ENCODE measurements at regions of chr4 and their contacts with region 1.

Region 1: GRCh38 chr4:74874753-74875367 is 58.1 kb upstream of the PARM1 start:
- DNase-seq: peak; percentile 79
- H3K4me3 Mint-ChIP-seq: no peak overlapping the region
- H3K27ac Mint-ChIP-seq: no peak overlapping the region
- H3K4me1 Mint-ChIP-seq: no peaks in the 10 kb centered on the region
- H3K27me3 Mint-ChIP-seq: no peaks in the 10 kb centered on the region
- CTCF ChIP-seq: peak; percentile 73

Region 2: GRCh38 chr4:74123065-74123728 is 751.7 kb before region 1 on chr4:
- CTCF ChIA-PET with region 1: no interaction called
- POLR2A ChIA-PET with region 1: no interaction called
- intact Hi-C with region 1: no loop called
- DNase-seq: peak; percentile 87
- H3K4me3 Mint-ChIP-seq: no peak overlapping the region
- H3K27ac Mint-ChIP-seq: no peak overlapping the region
- H3K4me1 Mint-ChIP-seq: peaks cover 23% of the 10 kb centered on the region
- H3K27me3 Mint-ChIP-seq: no peaks in the 10 kb centered on the region
- CTCF ChIP-seq: no peak

Region 3: GRCh38 chr4:74886490-74886889 is 11.6 kb after region 1 on chr4:
- CTCF ChIA-PET with region 1: interaction called, 39 read pairs
- POLR2A ChIA-PET with region 1: interaction called, 7 read pairs
- intact Hi-C with region 1: no loop called
- DNase-seq: peak; percentile 93
- H3K4me3 Mint-ChIP-seq: no peak overlapping the region
- H3K27ac Mint-ChIP-seq: peak overlapping the region; percentile 99
- H3K4me1 Mint-ChIP-seq: peaks cover 17% of the 10 kb centered on the region
- H3K27me3 Mint-ChIP-seq: no peaks in the 10 kb centered on the region
- CTCF ChIP-seq: no peak

Region 4: GRCh38 chr4:75289914-75290582 is 415.2 kb after region 1 on chr4:
- CTCF ChIA-PET with region 1: interaction called, 84 read pairs
- POLR2A ChIA-PET with region 1: interaction called, 4 read pairs
- intact Hi-C with region 1: loop called (anchors 1 kb)
- DNase-seq: peak; percentile 65
- H3K4me3 Mint-ChIP-seq: no peak overlapping the region
- H3K27ac Mint-ChIP-seq: no peak overlapping the region
- H3K4me1 Mint-ChIP-seq: no peaks in the 10 kb centered on the region
- H3K27me3 Mint-ChIP-seq: no peaks in the 10 kb centered on the region
- CTCF ChIP-seq: peak; percentile 59

Region 5: DNA sequence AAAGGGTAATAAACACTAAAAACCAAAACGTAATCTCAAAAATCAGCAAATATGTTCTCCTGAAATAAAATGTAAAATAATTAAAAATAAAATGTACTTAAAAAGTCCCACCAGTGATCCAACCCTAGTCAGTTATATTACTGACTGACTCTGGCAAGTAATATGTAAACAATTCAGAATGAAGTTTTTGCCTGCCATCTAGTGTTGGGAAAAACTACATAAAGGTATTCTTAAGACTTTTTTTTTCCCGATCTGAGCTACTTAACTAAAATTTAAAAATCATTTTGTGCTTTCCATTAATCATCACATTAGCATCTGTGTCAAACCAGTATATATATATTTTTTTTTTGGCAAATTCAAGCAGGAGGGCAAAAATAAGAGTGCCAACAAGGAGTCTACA is 615.3 kb after region 1 on chr4:
- CTCF ChIA-PET with region 1: interaction called, 3 read pairs
- POLR2A ChIA-PET with region 1: no interaction called
- intact Hi-C with region 1: loop called (anchors 10 kb)
- DNase-seq: peak; percentile 29
- H3K4me3 Mint-ChIP-seq: no peak overlapping the region
- H3K27ac Mint-ChIP-seq: no peak overlapping the region
- H3K4me1 Mint-ChIP-seq: peaks cover 7% of the 10 kb centered on the region
- H3K27me3 Mint-ChIP-seq: no peaks in the 10 kb centered on the region
- CTCF ChIP-seq: peak; percentile 16